Activated CD4-positive, alpha-beta memory T cell treated with anti-CD3 and anti-CD28 coated beads for 36 hours (primary cell): ENCODE measurements at regions of chr6 and their contacts with region 1.

Region 1: DNA sequence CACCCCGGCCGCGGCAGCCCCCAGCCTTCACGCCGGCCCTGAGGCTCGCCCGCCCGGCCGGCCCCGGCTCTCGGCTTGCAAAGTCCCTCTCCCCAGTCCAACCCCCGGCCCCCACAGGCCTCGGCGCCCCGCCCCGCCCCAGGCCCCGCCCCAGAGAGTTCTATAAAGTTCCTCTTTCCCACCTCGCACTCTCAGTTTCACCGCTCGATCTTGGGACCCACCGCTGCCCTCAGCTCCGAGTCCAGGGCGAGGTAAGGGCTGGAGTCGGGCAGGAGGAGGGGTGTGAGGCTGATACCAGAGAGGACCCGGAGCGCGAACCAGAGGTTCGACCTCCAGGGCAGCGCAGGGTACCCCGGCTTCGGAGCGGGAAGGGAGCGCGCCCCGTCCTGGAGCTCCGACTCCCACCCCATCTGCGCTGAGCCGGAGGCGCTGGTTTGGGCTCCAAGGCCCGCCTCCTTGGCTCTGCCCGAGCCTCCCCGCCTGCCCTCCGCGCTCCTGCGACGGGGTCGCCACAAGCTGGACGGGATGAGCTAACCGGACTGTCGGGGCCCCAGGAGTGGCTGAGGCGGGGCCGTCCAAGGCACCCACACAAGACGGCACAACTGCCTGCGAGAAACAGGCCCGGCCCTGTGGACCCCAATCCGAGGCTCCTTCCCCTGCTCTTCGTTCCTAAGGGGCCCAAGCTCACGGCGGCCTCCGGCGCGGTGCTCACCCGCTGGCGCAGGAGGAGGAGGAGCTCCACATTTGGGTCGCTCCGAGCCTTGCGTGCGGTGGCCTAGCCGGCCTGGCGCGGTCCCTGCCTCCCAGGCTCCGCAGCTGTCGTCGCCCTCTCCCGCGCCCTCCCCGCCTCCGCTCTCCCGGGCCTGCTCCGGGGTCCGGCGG is at the start of gene IRF4:
- DNase-seq: peak; percentile 83
- H3K4me3 Mint-ChIP-seq: peak within 1 kb of the TSS; percentile 94
- H3K27ac Mint-ChIP-seq: peak within 1 kb of the TSS; percentile 99
- H3K4me1 Mint-ChIP-seq: peaks cover 50% of the 10 kb centered on the region
- H3K27me3 Mint-ChIP-seq: peaks cover 5% of the 10 kb centered on the region
- total RNA-seq, gene IRF4: 689 to 705 TPM

Region 2: GRCh38 chr6:291697-292505 is 99.9 kb before region 1 on chr6 and contains the start of gene DUSP22:
- CTCF ChIA-PET with region 1: interaction called, 3 read pairs
- POLR2A ChIA-PET with region 1: interaction called, 3 read pairs
- intact Hi-C with region 1: loop called (anchors 1 kb)
- DNase-seq: peak; percentile 87
- H3K4me3 Mint-ChIP-seq: peak within 1 kb of the TSS; percentile 91
- H3K27ac Mint-ChIP-seq: peak within 1 kb of the TSS; percentile 92
- H3K4me1 Mint-ChIP-seq: peaks cover 43% of the 10 kb centered on the region
- H3K27me3 Mint-ChIP-seq: peaks cover 1% of the 10 kb centered on the region
- total RNA-seq, gene DUSP22: 28.0 to 28.7 TPM

Region 3: GRCh38 chr6:422433-423054 is 30.7 kb after region 1 on chr6:
- CTCF ChIA-PET with region 1: no interaction called
- POLR2A ChIA-PET with region 1: no interaction called
- intact Hi-C with region 1: no loop called
- DNase-seq: peak; percentile 87
- H3K4me3 Mint-ChIP-seq: no peak overlapping the region
- H3K27ac Mint-ChIP-seq: peak overlapping the region; percentile 87
- H3K4me1 Mint-ChIP-seq: peaks cover 30% of the 10 kb centered on the region
- H3K27me3 Mint-ChIP-seq: no peaks in the 10 kb centered on the region

Region 4: DNA sequence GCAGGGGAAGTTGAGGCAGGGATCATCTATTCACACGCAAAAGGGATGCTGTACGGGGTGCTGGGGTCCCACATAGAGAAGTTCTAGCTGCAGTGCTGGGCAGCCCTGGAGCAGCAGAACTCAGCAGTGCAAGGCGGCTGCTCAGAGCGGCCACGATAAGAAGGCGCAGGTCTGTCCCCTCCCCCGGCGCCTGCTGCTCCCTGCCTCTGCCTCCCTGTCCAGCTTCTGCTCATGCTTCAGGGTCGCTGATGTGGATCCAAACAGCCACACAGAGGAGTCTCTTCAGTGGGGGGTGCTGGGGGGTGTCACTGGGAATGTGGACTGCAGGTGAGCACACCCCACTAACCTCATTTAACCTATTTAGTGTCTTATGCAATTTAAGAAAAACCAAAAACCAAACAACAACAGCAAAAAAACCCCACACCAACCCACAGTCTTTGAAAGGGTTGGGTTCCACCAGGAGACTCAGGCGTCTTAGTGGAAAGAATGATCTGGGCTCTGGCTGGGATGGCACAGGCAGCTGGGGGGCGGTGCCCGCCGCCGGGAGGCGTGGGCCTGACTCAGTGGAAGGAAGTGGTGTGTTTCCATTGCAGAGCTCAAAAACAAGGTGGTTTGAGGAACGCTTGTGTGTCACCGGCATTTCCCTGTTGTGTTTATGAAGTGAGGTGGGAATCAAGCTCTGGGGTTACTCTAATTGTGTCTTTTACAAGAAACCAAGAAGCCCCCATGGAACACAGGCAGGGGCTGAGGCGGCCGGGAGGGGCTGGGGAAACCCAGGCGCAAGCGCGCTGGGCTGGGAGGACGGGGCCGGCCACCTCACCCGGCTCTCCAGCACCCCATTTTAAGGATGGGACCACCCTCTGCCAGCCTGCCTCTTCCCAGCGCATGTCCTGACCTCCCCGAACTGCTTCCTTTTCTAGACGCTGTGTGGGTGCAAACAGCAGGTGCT is 54.9 kb after region 1 on chr6:
- CTCF ChIA-PET with region 1: no interaction called
- POLR2A ChIA-PET with region 1: interaction called, 38 read pairs
- intact Hi-C with region 1: loop called (anchors 1 kb)
- DNase-seq: peak; percentile 97
- H3K4me3 Mint-ChIP-seq: peak overlapping the region; percentile 77
- H3K27ac Mint-ChIP-seq: peak overlapping the region; percentile 97
- H3K4me1 Mint-ChIP-seq: peaks cover 55% of the 10 kb centered on the region
- H3K27me3 Mint-ChIP-seq: peaks cover 1% of the 10 kb centered on the region

Region 5: DNA sequence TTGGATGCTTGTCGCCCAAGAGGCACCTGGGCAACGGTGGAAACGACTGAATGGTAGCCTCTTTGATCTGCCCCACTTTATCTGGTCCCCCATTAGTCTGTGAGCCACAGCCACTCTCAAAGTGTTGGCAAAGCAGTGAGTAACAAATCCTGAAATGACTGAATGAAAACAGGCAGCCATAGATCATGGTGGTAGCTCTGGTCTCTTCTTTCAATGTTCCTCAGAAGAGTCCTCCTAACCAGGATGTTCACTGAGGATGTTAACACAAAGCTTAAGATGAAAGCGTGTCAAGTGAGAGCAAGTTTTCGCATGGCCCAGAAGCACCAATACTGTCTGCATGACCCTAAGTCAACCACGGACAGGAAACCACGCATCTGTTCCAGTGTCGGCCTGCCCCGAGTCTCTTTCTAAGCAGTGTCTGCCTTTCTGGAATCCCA is 107.0 kb after region 1 on chr6:
- CTCF ChIA-PET with region 1: interaction called, 7 read pairs
- POLR2A ChIA-PET with region 1: interaction called, 136 read pairs
- intact Hi-C with region 1: loop called (anchors 1 kb)
- DNase-seq: peak; percentile 83
- H3K4me3 Mint-ChIP-seq: peak overlapping the region; percentile 61
- H3K27ac Mint-ChIP-seq: peak overlapping the region; percentile 93
- H3K4me1 Mint-ChIP-seq: peaks cover 83% of the 10 kb centered on the region
- H3K27me3 Mint-ChIP-seq: no peaks in the 10 kb centered on the region

Region 6: DNA sequence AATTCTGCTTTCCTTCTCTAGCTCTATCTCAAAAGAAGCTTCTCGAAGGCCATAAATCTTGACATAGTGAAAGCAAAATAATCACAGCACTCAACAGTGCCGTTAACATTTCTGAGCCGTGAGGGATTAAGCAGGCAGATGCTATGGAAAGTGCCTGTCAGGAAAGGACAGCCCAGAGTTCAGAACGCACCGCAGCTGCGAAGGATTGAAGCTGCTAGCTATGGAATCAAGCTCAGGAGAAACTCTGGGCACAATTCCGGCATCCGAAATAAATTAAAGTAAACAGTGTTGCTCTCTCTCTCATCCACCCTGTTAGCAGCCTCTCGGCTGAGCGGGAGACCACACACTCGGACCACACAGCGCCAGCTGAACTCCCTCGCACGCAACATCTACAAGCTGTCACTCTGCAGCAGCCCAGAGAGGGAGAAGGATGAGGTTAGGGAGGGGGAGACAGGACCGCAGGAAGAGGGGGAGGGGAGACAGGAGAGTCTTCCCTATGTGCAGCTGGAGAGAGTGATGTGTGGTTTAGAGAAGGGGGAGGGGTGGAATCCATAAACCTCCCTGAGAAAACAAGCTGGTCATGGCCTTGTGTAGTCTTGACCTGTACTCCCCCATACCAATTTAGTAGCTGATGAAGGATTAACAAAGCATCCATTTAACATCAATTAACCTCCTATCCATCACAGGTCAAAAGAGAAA is 292.1 kb after region 1 on chr6:
- CTCF ChIA-PET with region 1: no interaction called
- POLR2A ChIA-PET with region 1: no interaction called
- intact Hi-C with region 1: loop called (anchors 1 kb)
- DNase-seq: no peak
- H3K4me3 Mint-ChIP-seq: no peak overlapping the region
- H3K27ac Mint-ChIP-seq: no peak overlapping the region
- H3K4me1 Mint-ChIP-seq: peaks cover 51% of the 10 kb centered on the region
- H3K27me3 Mint-ChIP-seq: no peaks in the 10 kb centered on the region

Region 7: GRCh38 chr6:878187-878586 is 486.4 kb after region 1 on chr6:
- CTCF ChIA-PET with region 1: no interaction called
- POLR2A ChIA-PET with region 1: no interaction called
- intact Hi-C with region 1: no loop called
- DNase-seq: no peak
- H3K4me3 Mint-ChIP-seq: no peak overlapping the region
- H3K27ac Mint-ChIP-seq: no peak overlapping the region
- H3K4me1 Mint-ChIP-seq: no peaks in the 10 kb centered on the region
- H3K27me3 Mint-ChIP-seq: peaks cover 32% of the 10 kb centered on the region

Region 8: DNA sequence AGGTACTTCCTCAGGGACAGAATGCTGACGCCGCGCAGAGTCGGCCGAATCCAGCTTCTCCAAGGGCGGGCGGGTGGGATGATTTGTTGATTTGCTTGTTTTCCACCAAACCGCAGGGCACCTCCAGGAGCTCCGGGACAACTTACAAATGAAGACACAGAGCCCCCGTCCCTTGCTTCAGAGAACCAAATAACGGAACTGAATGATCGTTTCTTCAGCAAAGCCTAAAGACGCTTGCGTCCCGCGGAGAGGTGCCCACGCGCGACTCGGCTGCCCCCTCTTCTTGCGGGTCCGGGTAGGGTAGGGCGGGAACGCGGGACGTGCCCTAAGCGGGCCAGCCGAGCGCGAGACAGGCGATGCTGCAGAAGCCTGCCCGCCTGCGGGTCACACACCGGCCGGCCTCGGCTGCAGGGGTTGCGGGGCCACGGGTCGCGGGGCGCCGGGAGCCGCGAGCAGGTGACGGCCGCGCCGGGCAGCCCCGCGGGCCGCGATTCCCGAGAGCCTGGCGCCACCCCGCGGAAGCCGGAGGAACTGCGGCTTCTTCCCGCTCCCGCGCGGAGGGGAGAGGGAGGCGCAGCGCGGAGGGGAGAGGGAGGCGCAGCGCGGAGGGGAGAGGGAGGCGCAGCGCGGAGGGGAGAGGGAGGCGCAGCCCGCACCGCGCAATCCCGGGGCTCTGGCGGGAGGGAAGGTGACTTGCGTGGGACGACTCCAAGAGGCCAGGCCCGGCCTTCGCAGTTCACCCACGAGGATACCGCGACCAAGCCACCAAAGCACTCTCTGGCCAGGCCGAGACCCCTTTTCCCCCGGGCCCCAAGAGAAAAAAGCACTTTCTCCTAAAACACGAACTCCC is 989.9 kb after region 1 on chr6:
- CTCF ChIA-PET with region 1: no interaction called
- POLR2A ChIA-PET with region 1: no interaction called
- intact Hi-C with region 1: loop called (anchors 5 kb)
- DNase-seq: peak; percentile 72
- H3K4me3 Mint-ChIP-seq: no peak overlapping the region
- H3K27ac Mint-ChIP-seq: no peak overlapping the region
- H3K4me1 Mint-ChIP-seq: peaks cover 31% of the 10 kb centered on the region
- H3K27me3 Mint-ChIP-seq: peaks cover 70% of the 10 kb centered on the region